SK-N-SH (cell line): ENCODE measurements at regions of chr7 and their contacts with region 1.

Region 1: GRCh38 chr7:36986429-36987362 is 262.4 kb upstream of the AOAH start:
- DNase-seq: peak; percentile 79
- H3K4me3 ChIP-seq: peak overlapping the region; percentile 6 to 56; a peak in 3 of 4 replicates
- H3K27ac ChIP-seq: peak overlapping the region in 1 of 2 experiments; percentile 93; a peak in 2 of 4 replicates
- H3K4me1 ChIP-seq: peaks cover 0 to 35% of the 10 kb centered on the region in 2 experiments; a peak in 2 of 4 replicates
- H3K27me3 ChIP-seq: peaks cover 32% of the 10 kb centered on the region; the same call in 1 of the 2 replicates
- CTCF ChIP-seq: peak; percentile 99
- EP300 ChIP-seq: peak in 1 of 2 experiments; percentile 49; a peak in 2 of 4 replicates
- RAD21 ChIP-seq: peak; percentile 91

Region 2: DNA sequence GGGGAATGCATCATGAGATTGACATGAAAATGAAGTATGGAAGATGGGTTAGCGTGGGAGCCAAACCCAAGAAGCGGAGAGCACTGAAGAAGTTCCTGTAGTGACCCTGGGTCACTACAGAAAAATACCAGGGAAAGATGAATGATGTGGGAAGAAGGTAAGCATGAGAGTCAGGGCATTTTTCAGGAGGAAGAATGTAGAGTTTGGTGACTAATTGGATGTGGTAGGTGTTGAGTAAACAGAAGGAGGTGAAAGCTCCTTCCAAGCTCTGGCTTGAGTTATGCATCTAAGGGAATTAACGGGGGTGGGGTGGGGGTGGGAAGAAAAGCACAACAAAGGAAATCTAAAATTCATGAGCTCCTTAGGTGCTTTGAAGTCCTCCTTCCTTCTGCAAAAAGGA is 24.3 kb before region 1 on chr7:
- CTCF ChIA-PET with region 1: interaction called, 241 read pairs
- POLR2A ChIA-PET with region 1: interaction called, 17 read pairs
- DNase-seq: no peak
- H3K4me3 ChIP-seq: no peak overlapping the region
- H3K27ac ChIP-seq: no peak overlapping the region
- H3K4me1 ChIP-seq: peaks cover 0 to 30% of the 10 kb centered on the region in 2 experiments; a peak in 2 of 4 replicates
- H3K27me3 ChIP-seq: no peaks in the 10 kb centered on the region
- CTCF ChIP-seq: no peak
- EP300 ChIP-seq: no peak
- RAD21 ChIP-seq: no peak

Region 3: GRCh38 chr7:37007268-37007667 is 20.6 kb after region 1 on chr7:
- CTCF ChIA-PET with region 1: interaction called, 54 read pairs
- POLR2A ChIA-PET with region 1: no interaction called
- DNase-seq: no peak
- H3K4me3 ChIP-seq: no peak overlapping the region
- H3K27ac ChIP-seq: peak overlapping the region in 1 of 2 experiments; percentile 30; a peak in 2 of 4 replicates
- H3K4me1 ChIP-seq: peaks cover 0 to 48% of the 10 kb centered on the region in 2 experiments; a peak in 2 of 4 replicates
- H3K27me3 ChIP-seq: peaks cover 31% of the 10 kb centered on the region
- CTCF ChIP-seq: no peak
- EP300 ChIP-seq: no peak
- RAD21 ChIP-seq: no peak

Region 4: DNA sequence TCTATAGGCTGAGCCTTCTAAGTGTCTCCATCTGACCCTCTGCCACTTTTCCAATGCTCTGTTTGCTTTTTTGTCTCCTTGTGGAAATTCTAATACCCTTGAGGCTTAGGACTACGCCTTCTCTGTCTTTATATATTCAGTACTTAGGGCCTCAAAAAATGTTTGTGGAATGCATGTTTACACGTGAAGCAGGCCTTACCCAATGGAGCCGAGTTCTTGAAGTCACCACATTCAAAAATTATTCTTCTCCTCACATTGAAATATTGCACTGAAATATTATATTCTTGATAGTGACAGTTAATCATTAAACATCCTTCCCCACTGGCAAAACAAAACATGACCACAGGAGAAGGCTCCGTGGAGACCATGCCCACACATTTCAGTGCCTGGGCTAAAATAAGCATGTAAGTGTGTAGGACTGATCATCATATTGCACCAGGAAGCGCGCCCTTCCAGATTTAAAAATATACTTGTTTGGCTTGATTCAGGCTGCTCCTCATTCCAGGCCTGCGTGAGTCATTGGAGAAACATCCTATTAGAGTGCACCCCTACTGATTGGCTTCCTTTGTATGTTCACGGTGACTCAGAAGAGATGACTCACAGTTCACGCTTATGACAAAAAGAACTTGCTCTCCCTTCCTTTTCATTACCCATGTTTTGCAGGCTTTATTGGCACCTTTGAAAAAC is 45.0 kb after region 1 on chr7:
- CTCF ChIA-PET with region 1: interaction called, 12 read pairs
- POLR2A ChIA-PET with region 1: no interaction called
- DNase-seq: no peak
- H3K4me3 ChIP-seq: no peak overlapping the region
- H3K27ac ChIP-seq: peak overlapping the region; percentile 36 to 64; a peak in 3 of 4 replicates
- H3K4me1 ChIP-seq: peaks cover 14 to 19% of the 10 kb centered on the region in 2 experiments
- H3K27me3 ChIP-seq: no peaks in the 10 kb centered on the region
- CTCF ChIP-seq: no peak
- EP300 ChIP-seq: peak in 1 of 2 experiments; percentile 90; a peak in 1 of 4 replicates
- RAD21 ChIP-seq: no peak

Region 5: DNA sequence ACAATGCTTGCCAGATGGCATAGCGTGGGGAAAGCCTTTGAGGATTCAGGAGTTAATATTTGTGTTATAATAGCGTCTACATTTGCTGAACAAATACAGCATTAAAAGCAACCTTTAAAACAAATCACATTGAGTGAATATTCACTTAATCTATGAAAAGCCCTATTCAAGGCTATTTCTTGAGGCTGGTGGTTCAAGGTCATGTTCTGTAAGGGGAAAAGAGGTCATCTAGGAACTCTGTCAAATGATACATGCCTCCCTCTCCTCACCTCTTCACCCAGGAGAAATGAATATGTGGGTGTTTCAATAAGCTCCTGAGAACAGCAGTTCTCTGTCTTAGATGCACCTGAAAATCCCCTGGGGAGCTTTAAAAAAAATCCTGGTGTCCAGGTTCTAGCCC is 159.0 kb after region 1 on chr7:
- CTCF ChIA-PET with region 1: interaction called, 11 read pairs
- POLR2A ChIA-PET with region 1: interaction called, 3 read pairs
- DNase-seq: no peak
- H3K4me3 ChIP-seq: no peak overlapping the region
- H3K27ac ChIP-seq: no peak overlapping the region
- H3K4me1 ChIP-seq: no peaks in the 10 kb centered on the region
- H3K27me3 ChIP-seq: no peaks in the 10 kb centered on the region
- CTCF ChIP-seq: no peak
- EP300 ChIP-seq: no peak
- RAD21 ChIP-seq: no peak